Endothelial cell of umbilical vein (primary cell): ENCODE measurements at regions of chr9 and their contacts with region 1.

Region 1: DNA sequence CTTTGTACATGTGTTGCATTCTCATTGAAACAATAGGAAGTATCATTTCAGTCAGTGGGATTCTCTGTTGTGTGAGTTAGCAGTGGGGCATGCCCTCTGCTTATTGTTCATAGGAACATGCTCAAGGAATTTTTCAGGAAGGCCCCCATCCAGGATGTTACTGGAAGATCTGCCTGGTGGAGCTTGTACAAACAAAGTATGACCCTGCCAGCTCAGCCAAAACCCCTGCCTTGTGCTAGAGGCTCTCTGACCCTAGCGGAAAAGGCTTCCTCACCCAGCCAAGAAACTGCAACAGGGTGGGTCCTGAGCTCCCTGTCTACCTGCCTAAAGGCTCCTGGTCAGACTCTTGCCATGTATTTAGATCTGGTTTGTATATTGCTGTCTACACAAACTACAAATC is 43.2 kb downstream of the MRRF start:
- DNase-seq: peak; percentile 92
- H3K4me3 ChIP-seq: no peak overlapping the region
- H3K27ac ChIP-seq: peak overlapping the region; percentile 84
- H3K4me1 ChIP-seq: peaks cover 53% of the 10 kb centered on the region
- H3K27me3 ChIP-seq: no peaks in the 10 kb centered on the region
- CTCF ChIP-seq: no peak
- POLR2A ChIP-seq: no peak

Region 2: GRCh38 chr9:122254761-122255160 is 53.2 kb before region 1 on chr9:
- CTCF ChIA-PET with region 1: interaction called, 4 read pairs
- POLR2A ChIA-PET with region 1: interaction called, 5 read pairs
- dilution Hi-C with region 1: no loop called
- intact Hi-C with region 1: loop called (anchors 1 kb)
- DNase-seq: no peak
- H3K4me3 ChIP-seq: peak overlapping the region in 1 of 3 experiments; percentile 33
- H3K27ac ChIP-seq: peak overlapping the region; percentile 88
- H3K4me1 ChIP-seq: peaks cover 37% of the 10 kb centered on the region
- H3K27me3 ChIP-seq: no peaks in the 10 kb centered on the region
- CTCF ChIP-seq: no peak
- POLR2A ChIP-seq: no peak

Region 3: DNA sequence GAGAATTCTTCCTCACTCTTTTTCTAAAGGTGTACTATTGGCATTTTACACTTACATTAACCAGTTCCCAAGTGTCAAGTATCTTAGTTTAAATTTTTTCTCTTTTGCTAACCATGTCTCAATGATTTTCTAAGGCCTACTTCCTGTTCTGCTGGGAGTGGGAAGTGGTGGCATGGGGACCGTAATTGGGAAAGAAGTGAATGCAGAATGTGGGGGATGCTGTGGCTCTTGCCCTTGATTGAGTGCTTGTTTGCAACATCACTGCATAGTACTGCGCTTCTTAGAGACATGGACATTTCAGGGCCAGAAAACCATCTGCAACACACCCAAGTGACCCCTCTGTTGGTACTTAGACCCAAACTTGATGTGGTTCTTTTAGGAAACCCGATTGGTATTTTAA is 10.4 kb before region 1 on chr9:
- CTCF ChIA-PET with region 1: no interaction called
- POLR2A ChIA-PET with region 1: no interaction called
- dilution Hi-C with region 1: no loop called
- intact Hi-C with region 1: no loop called
- DNase-seq: no peak
- H3K4me3 ChIP-seq: no peak overlapping the region
- H3K27ac ChIP-seq: no peak overlapping the region
- H3K4me1 ChIP-seq: peaks cover 3% of the 10 kb centered on the region
- H3K27me3 ChIP-seq: no peaks in the 10 kb centered on the region
- CTCF ChIP-seq: no peak
- POLR2A ChIP-seq: no peak

Region 4: DNA sequence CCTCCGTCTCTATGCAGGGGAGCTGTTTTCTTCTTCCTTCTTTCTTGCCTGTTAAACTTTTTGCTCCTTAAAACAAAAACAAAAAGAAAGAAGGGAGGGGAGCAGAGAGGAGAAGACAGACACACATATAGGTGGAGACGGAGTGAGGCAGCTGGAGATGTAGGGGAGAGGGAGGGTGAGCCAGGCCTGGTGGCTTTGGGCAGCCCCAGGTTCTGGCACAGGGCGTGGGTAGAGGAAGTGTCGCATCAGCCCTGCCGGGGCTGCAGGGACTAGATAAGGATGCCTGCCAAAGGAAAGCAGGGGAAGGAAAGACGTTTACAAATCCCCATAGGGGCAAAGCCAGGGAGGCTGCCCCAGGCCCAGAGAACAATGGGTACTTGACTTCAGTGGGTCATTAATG is 24.2 kb after region 1 on chr9:
- CTCF ChIA-PET with region 1: interaction called, 11 read pairs
- POLR2A ChIA-PET with region 1: no interaction called
- dilution Hi-C with region 1: no loop called
- intact Hi-C with region 1: no loop called
- DNase-seq: peak; percentile 83
- H3K4me3 ChIP-seq: no peak overlapping the region
- H3K27ac ChIP-seq: peak overlapping the region; percentile 13
- H3K4me1 ChIP-seq: peaks cover 21% of the 10 kb centered on the region
- H3K27me3 ChIP-seq: no peaks in the 10 kb centered on the region
- CTCF ChIP-seq: no peak
- POLR2A ChIP-seq: peak; percentile 26

Region 5: DNA sequence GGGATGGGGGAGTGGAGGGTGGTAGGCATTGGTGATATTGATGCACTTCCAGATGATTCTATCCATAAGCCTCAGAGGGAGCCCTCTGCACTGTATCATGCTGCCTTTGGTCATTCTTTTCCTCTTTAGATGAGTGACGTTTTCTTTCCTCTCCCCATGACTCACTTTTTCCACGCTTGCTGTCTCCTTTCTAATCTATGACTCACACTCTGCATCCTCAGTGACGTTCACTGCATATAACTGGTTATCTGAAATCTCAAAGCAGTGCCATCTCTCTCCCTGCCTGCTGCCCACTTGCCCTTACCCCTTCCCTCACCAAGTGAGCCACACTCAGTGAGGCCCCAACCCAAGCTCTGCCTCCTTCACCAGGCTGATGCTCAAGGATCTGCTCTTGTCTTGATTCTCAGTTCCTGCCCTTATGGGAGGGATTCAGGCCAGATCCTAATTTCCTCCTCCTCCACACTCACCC is 94.5 kb after region 1 on chr9:
- CTCF ChIA-PET with region 1: no interaction called
- POLR2A ChIA-PET with region 1: no interaction called
- dilution Hi-C with region 1: no loop called
- intact Hi-C with region 1: no loop called
- DNase-seq: peak; percentile 97
- H3K4me3 ChIP-seq: no peak overlapping the region
- H3K27ac ChIP-seq: peak overlapping the region; percentile 94
- H3K4me1 ChIP-seq: peaks cover 13% of the 10 kb centered on the region
- H3K27me3 ChIP-seq: no peaks in the 10 kb centered on the region
- CTCF ChIP-seq: no peak
- POLR2A ChIP-seq: no peak

Region 6: GRCh38 chr9:122816163-122816867 is 508.4 kb after region 1 on chr9:
- CTCF ChIA-PET with region 1: no interaction called
- POLR2A ChIA-PET with region 1: no interaction called
- dilution Hi-C with region 1: no loop called
- intact Hi-C with region 1: loop called (anchors 2 kb)
- DNase-seq: peak; percentile 98
- H3K4me3 ChIP-seq: peak overlapping the region in 2 of 3 experiments; percentile 21 to 39
- H3K27ac ChIP-seq: peak overlapping the region; percentile 97
- H3K4me1 ChIP-seq: peaks cover 61% of the 10 kb centered on the region
- H3K27me3 ChIP-seq: no peaks in the 10 kb centered on the region
- CTCF ChIP-seq: no peak
- POLR2A ChIP-seq: peak; percentile 75